Right cardiac atrium (tissue), 5 donors: ENCODE measurements at regions of chr5 and their contacts with region 1.

Region 1: DNA sequence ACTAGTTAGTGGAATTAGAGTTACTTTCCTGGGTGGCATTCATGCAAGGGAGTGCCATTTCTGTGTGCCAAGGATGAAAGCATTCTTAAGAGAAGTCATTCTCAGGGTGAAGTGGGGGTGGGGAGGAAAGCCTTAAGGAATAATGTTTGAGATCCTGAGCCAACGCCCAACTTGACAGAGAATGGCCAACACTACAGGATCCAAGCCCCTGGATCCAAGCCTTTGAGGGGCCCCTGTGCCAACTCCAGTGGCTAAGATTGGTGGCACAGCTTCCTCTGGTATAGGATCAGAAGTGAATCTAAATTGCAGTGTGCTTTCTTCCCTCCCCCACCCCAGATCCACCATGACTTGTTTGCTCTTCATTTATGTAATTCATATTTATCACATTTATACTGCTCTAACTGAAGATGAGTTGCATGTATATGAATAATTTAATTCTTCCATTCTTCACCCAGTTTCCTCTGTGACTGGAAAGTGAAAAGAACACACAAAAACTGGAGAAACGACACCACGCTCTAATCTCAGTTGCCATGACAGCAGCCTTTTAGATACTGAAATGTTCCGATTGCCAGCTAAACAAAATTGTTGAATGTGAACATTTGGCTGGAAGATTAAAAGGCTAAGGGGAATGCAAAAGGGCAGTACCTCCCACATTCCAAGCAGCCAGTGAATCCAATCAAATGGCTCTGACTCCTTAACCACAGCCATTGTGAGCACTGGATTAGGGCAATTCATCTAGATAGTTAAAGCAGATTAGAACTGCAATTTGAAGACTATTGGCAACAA is 4.5 kb downstream of the ZNF608 start:
- DNase-seq: peak in 1 of 3 donors; percentile 50
- ATAC-seq: peak; percentile 62 to 65
- H3K4me3 ChIP-seq: peak overlapping the region; percentile 85
- H3K27ac ChIP-seq: peak overlapping the region; percentile 46
- H3K4me1 ChIP-seq: peaks cover 3% of the 10 kb centered on the region
- H3K27me3 ChIP-seq: no peaks in the 10 kb centered on the region

Region 2: DNA sequence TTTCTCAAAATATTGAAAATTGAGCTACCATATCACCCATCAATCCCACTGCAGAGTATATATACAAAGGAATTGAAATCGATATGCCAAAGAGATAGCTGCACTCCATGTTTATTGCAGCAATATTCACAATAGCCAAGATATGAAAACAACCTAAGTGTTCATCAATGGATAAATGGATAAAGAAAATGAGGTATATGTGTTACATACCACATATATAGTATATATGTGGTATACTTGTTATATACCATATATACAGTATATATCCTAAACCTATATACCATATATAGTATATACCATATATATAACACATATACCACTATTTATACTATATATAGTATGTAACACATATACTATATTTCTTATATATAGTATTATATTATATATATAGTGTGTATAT is 308.7 kb before region 1 on chr5:
- intact Hi-C with region 1: no loop called
- DNase-seq: no peak
- ATAC-seq: no peak
- H3K4me3 ChIP-seq: no peak overlapping the region
- H3K27ac ChIP-seq: no peak overlapping the region
- H3K4me1 ChIP-seq: no peaks in the 10 kb centered on the region
- H3K27me3 ChIP-seq: no peaks in the 10 kb centered on the region

Region 3: DNA sequence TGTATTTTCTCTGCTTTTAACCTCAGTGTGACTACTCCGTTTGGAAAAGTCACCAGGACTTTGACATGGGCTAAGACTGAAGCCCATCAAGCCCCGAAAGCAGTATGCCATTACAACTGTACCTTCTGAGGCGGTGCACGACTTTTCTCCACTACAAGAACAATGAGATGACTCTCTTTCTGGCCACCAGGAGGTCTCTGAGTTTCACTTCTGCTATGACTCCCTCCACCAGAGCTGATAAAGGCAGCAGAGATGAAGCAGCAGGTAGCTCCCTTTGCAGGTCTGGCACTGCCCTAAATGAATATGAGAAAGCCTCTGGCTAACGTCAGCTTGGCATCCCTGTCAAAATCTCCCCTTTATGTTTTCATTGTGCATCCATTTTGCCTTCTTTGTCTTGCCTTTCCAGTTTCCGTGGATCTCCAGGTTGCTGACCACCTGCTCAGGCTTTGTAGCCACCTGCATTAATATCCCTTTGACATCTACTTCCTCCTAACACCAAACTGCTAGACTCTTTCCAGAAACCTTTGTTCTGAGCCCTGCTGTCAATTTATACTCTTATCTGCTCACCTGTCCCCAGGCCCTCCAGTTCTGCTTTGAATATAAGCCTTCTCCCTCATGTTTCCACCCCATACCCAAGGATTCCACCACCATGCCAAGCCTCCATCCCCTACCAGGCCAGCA is 217.2 kb before region 1 on chr5:
- intact Hi-C with region 1: no loop called
- DNase-seq: no peak
- ATAC-seq: no peak
- H3K4me3 ChIP-seq: no peak overlapping the region
- H3K27ac ChIP-seq: no peak overlapping the region
- H3K4me1 ChIP-seq: no peaks in the 10 kb centered on the region
- H3K27me3 ChIP-seq: no peaks in the 10 kb centered on the region

Region 4: DNA sequence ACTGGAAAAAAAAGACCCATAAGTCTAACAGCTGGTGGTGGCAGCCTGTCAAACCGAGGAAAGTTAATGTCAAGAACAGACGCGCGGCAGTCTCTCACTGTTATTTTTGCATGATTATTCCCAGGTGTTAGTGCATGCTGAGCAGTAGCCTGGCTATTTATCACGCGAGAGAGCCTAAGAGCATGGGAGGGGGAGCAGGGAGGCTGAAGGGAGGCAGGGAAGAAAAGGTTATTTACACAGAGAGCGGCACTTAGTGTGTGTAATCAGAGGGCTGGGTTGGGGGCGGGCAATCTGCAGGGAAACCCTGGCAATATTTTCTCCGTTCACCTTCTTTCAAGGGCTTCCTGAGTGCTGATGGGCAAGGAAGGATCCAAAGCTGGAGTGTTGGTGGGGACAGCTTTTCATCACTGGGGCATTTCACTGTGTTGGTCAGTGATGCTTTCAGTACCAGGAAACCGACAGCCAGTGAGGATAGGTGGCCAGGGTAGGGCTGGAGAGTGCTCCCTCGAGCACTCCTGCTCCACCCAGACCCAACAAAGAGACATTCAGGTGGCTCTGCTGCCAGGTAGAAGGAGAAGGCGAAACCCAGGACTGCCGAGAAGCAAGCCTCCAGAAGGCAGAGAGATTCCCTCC is 35.1 kb before region 1 on chr5:
- intact Hi-C with region 1: loop called in 1 of 4 experiments (anchors 5 kb)
- DNase-seq: peak; percentile 35 to 73 (median 63)
- ATAC-seq: peak; percentile 83 to 84
- H3K4me3 ChIP-seq: peak overlapping the region; percentile 24
- H3K27ac ChIP-seq: peak overlapping the region; percentile 73
- H3K4me1 ChIP-seq: peaks cover 9% of the 10 kb centered on the region
- H3K27me3 ChIP-seq: no peaks in the 10 kb centered on the region

Region 5: GRCh38 chr5:125006011-125006685 is 264.2 kb after region 1 on chr5:
- intact Hi-C with region 1: loop called in 1 of 4 experiments (anchors 5 kb)
- DNase-seq: no peak
- ATAC-seq: no peak
- H3K4me3 ChIP-seq: no peak overlapping the region
- H3K27ac ChIP-seq: no peak overlapping the region
- H3K4me1 ChIP-seq: no peaks in the 10 kb centered on the region
- H3K27me3 ChIP-seq: no peaks in the 10 kb centered on the region